Panc1 (cell line): ENCODE measurements at regions of chr21 and their contacts with region 1.

Region 1: DNA sequence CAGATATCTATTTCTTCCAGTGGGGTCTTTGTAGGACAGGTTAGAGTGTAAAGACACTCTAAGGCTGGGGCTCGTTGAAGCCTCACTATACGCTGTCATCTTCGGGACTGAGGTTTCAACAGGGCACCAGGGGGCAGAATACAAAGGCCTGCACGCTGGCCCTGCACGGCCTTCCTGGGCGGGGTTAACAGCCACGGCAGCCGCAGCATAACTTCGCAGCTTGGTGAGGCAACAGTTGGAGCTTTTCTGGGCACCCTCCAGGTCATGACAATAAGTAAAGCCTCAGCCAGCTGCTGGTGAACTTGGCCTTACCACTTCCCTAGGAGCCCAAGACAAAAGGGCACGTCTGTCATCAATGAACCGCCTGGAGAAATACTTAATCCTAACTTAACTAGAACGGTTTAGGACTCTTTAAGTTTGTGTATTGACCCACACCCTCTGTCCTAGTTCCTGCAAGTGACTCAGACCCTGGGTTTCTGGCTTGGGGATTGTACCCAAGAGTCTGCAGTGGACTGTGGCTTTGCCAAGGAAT is 2.3 kb upstream of the RUNX1 start:
- DNase-seq: no peak
- ATAC-seq: peak; percentile 83
- H3K4me3 ChIP-seq: no peak overlapping the region
- H3K27ac ChIP-seq: peak overlapping the region; percentile 59; the same call in 1 of the 2 replicates
- H3K4me1 ChIP-seq: peaks cover 8% of the 10 kb centered on the region
- H3K27me3 ChIP-seq: no peaks in the 10 kb centered on the region
- CTCF ChIP-seq: peak; percentile 79

Region 2: DNA sequence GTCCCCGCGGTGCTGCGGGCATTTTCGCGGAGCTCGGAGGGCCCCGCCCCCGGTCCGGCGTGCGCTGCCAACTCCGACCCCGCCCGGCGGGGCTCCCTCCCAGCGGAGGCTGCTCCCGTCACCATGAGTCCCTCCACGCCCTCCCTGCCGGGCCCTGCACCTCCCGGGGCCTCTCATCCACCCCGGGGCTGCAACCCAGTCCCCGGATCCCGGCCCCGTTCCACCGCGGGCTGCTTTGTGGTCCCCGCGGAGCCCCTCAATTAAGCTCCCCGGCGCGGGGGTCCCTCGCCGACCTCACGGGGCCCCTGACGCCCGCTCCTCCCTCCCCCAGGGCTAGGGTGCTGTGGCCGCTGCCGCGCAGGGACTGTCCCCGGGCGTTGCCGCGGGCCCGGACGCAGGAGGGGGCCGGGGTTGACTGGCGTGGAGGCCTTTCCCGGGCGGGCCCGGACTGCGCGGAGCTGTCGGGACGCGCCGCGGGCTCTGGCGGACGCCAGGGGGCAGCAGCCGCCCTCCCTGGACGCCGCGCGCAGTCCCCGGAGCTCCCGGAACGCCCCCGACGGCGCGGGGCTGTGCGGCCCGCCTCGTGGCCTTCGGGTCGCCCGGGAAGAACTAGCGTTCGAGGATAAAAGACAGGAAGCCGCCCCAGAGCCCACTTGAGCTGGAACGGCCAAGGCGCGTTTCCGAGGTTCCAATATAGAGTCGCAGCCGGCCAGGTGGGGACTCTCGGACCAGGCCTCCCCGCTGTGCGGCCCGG is 161.5 kb before region 1 on chr21:
- CTCF ChIA-PET with region 1: interaction called, 3 read pairs
- POLR2A ChIA-PET with region 1: no interaction called
- in situ Hi-C with region 1: no loop called
- intact Hi-C with region 1: loop called (anchors 5 kb)
- DNase-seq: no peak
- ATAC-seq: peak; percentile 70
- H3K4me3 ChIP-seq: peak overlapping the region; percentile 63 to 65
- H3K27ac ChIP-seq: peak overlapping the region; percentile 63; the same call in 1 of the 2 replicates
- H3K4me1 ChIP-seq: no peaks in the 10 kb centered on the region; the same call in 1 of the 2 replicates
- H3K27me3 ChIP-seq: 0 out of 2 replicates have a peak, but pooled peaks cover 2% of the 10 kb centered on the region
- CTCF ChIP-seq: peak; percentile 91

Region 3: DNA sequence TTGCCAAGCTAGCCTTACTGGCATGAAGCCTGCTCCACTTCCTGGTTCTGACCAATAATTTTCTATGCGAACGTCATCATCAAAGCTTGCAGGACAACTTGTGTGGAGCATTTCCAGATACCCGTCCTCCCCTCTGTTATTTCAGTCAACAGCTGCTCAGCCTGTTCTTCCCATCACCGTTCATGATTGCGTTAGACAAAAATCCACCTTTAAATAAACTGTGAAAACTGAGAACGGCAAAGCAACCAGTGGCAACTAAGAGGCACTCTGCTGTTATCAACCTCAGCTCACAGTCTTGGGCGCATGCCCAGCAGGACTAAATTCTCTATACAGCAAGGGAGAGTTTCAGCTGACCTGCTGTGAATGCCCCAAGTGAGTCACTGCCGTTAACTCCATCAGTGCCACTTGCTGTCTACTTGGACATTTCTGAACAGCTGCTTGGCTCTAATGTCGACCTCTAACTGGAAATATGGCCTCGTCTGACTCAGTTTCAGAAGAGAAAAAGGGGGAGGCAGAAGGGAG is 205.2 kb after region 1 on chr21:
- CTCF ChIA-PET with region 1: no interaction called
- POLR2A ChIA-PET with region 1: no interaction called
- in situ Hi-C with region 1: no loop called
- intact Hi-C with region 1: loop called (anchors 10 kb)
- DNase-seq: peak; percentile 91
- ATAC-seq: peak; percentile 98
- H3K4me3 ChIP-seq: peak overlapping the region; percentile 28 to 53
- H3K27ac ChIP-seq: peak overlapping the region; percentile 88
- H3K4me1 ChIP-seq: peaks cover 15% of the 10 kb centered on the region; the same call in 1 of the 2 replicates
- H3K27me3 ChIP-seq: no peaks in the 10 kb centered on the region
- CTCF ChIP-seq: no peak

Region 4: GRCh38 chr21:35377505-35378090 is 326.2 kb after region 1 on chr21:
- CTCF ChIA-PET with region 1: no interaction called
- POLR2A ChIA-PET with region 1: no interaction called
- in situ Hi-C with region 1: no loop called
- intact Hi-C with region 1: no loop called
- DNase-seq: no peak
- ATAC-seq: no peak
- H3K4me3 ChIP-seq: no peak overlapping the region
- H3K27ac ChIP-seq: no peak overlapping the region
- H3K4me1 ChIP-seq: no peaks in the 10 kb centered on the region
- H3K27me3 ChIP-seq: no peaks in the 10 kb centered on the region
- CTCF ChIP-seq: no peak

Region 5: DNA sequence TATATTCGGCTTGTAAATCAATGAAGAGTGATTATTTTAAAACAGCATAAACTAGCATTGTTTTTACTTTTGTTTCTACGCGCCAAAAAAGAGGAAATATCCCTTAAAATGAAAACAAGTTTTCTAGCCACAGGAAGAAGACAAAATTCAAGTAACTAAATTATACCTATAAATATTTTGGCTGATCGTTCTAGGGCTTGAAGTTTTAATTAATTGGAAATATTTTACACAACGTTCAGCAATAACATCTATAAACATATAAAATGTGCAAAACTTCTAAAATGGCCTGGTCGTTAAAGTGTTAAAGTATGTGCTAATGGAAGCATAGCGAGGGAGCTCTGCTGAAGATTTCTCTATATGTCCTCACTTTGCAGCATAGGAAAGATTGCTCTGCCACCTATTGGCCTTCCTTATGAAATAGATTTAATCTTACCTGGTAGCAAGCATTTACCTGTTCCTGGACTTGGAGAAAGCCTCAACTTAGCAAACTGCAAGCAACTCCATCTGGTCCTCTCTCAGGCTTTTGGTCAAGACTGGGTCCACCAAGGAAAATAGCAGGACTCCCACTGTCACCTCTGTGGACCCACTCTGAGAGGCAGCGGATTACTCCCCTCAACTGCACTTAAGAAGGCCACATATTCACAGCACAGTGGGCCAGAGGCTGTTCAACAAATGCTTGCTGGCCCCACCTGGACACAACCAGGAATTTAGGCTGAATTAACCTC is 349.0 kb after region 1 on chr21:
- CTCF ChIA-PET with region 1: interaction called, 4 read pairs
- POLR2A ChIA-PET with region 1: no interaction called
- in situ Hi-C with region 1: no loop called
- intact Hi-C with region 1: loop called (anchors 1 kb)
- DNase-seq: peak; percentile 75
- ATAC-seq: peak; percentile 92
- H3K4me3 ChIP-seq: no peak overlapping the region
- H3K27ac ChIP-seq: no peak overlapping the region
- H3K4me1 ChIP-seq: 0 out of 2 replicates have a peak, but pooled peaks cover 4% of the 10 kb centered on the region
- H3K27me3 ChIP-seq: no peaks in the 10 kb centered on the region
- CTCF ChIP-seq: peak; percentile 63

Region 6: GRCh38 chr21:35840197-35840799 is 788.9 kb after region 1 on chr21:
- CTCF ChIA-PET with region 1: no interaction called
- POLR2A ChIA-PET with region 1: no interaction called
- in situ Hi-C with region 1: no loop called
- intact Hi-C with region 1: loop called (anchors 5 kb)
- DNase-seq: peak; percentile 38
- ATAC-seq: 0 out of 2 replicates have a peak, but pooled peaks have one; percentile 62
- H3K4me3 ChIP-seq: no peak overlapping the region
- H3K27ac ChIP-seq: no peak overlapping the region
- H3K4me1 ChIP-seq: no peaks in the 10 kb centered on the region
- H3K27me3 ChIP-seq: no peaks in the 10 kb centered on the region
- CTCF ChIP-seq: peak; percentile 70; the same call in 1 of the 2 replicates